Sigmoid colon (tissue), 7 donors: ENCODE measurements at regions of chr7 and their contacts with region 1.

Region 1: DNA sequence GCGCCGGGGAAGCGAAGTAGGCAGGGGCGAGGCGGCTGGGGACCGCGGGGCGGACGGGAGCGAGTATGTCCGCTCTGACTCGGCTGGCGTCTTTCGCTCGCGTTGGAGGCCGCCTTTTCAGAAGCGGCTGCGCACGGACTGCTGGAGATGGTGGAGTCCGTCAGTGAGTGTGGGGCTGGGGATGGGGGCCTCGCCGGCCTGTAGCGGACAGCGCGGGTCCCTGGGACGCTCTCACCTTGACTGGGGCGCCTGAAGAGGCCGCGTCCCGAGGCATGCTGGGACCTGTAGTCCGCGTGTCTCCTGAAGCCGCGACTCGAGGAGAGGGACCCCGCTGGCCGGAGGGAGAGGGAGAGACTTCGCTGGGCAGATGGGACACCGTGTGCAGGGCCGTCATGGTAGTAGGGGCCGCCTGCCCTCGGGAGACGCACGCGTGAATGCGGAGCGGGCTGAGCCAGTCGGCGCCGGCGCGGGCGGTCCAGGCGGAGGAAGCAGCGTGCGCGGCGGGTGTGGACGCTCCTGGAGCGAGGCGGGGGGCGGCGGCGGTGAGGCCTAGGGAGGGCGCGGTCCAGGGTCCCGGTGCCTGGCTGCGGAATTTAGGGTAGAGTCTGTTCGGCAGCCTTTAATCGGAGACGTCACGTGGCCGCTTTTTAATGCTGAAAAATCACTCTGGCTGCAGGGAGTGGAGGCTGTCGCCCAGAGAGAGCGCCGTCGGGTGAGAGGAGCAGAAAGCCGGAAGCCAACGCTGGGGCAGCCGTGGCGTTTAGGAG is at the start of gene NDUFB2:
- DNase-seq: peak; percentile 90
- H3K4me3 ChIP-seq: peak within 1 kb of the TSS; percentile 71 to 93 (median 87)
- H3K27ac ChIP-seq: peak within 1 kb of the TSS; percentile 94 to 98 (median 95)
- H3K4me1 ChIP-seq: peaks cover 0 to 28% (median 22%) of the 10 kb centered on the region in 4 donors
- H3K27me3 ChIP-seq: no peaks in the 10 kb centered on the region
- CTCF ChIP-seq: no peak
- EP300 ChIP-seq: no peak
- POLR2A ChIP-seq: peak; percentile 73 to 91
- total RNA-seq, gene NDUFB2: 170 to 377 (median 267) TPM

Region 2: DNA sequence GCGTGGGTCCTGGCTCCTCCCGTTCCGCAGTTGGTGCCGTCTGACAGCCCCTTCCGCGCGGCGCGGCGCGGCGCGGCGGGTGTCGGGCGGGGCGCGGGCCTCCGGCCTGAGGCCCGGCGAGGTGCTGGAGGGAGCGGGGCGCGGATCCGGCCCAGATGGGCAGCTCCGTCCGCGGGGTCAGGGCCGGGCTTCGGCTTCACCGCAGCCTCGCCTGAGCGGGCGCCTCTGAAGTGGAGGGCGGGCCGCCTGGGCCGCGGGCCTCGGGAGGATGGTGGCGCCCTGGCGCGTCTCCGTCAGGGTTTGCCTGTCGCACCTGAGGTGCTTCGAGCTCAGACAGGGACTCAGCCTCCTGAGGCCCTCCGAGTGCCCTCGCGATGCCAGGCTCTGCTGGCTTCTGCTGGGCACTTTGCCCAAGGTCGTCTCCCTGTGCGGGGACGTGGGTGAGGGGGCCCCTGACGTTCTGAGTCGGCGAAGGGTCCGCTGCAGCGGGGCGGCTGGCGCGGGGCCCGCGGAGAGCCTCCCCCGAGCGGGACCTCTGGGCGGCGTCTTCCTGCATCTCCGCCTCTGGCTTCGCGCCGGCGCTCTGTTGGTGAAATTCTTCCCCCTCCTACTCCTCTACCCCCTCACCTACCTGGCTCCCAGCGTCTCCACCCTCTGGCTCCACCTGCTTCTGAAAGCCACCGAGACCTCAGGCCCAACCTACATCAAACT is 23.6 kb before region 1 on chr7:
- intact Hi-C with region 1: loop called (anchors 1 kb)
- DNase-seq: peak; percentile 70
- H3K4me3 ChIP-seq: peak overlapping the region; percentile 53 to 79 (median 74)
- H3K27ac ChIP-seq: peak overlapping the region; percentile 79 to 87 (median 82)
- H3K4me1 ChIP-seq: peaks cover 0 to 35% (median 29%) of the 10 kb centered on the region in 4 donors
- H3K27me3 ChIP-seq: no peaks in the 10 kb centered on the region
- CTCF ChIP-seq: no peak
- EP300 ChIP-seq: no peak
- POLR2A ChIP-seq: peak in 1 of 2 donors; percentile 35

Region 3: GRCh38 chr7:140841166-140841715 is 144.4 kb after region 1 on chr7:
- intact Hi-C with region 1: no loop called
- DNase-seq: no peak
- H3K4me3 ChIP-seq: no peak overlapping the region
- H3K27ac ChIP-seq: no peak overlapping the region
- H3K4me1 ChIP-seq: no peaks in the 10 kb centered on the region
- H3K27me3 ChIP-seq: no peaks in the 10 kb centered on the region
- CTCF ChIP-seq: no peak
- EP300 ChIP-seq: no peak
- POLR2A ChIP-seq: no peak

Region 4: DNA sequence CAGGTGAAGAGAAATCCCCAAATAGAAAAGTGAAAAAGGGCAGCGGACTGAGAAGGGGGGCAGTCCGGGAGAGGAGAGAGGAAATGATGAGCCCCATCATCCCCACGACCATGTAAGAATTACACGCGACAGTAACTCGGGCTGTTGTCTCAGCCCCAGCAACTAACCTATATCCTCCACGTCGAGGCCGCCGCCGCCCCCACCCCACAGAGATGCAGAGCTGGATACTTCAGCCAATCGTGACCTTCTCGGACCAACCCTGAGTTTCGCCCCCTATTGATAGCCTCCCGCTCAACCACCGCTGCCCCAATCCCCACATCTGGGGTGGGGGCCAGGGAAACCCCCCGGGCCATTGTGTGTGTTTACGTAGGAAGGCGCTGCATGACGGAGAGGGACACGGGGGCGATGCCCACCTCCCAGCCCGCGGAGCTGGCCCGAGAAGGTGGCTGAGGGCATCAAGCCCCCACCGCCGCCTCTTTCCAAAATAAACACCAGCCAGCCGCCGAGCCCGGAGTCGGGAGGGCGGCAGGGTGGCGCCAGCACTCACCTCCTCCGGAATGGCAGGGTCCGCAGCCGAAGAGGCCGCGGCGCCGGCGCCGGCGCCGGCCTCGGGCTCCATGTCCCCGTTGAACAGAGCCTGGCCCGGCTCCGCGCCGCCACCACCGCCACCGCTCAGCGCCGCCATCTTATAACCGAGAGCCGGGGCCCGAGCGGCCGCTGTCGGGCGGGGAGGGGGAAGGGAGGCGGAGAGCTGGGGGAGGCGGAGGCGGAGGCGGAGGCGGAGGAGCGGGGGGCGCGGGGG is 227.4 kb after region 1 on chr7:
- intact Hi-C with region 1: loop called (anchors 5 kb)
- DNase-seq: peak; percentile 88
- H3K4me3 ChIP-seq: peak overlapping the region; percentile 91 to 97 (median 96)
- H3K27ac ChIP-seq: peak overlapping the region; percentile 96 to 100 (median 100)
- H3K4me1 ChIP-seq: peaks cover 3 to 42% (median 23%) of the 10 kb centered on the region in 4 donors
- H3K27me3 ChIP-seq: no peaks in the 10 kb centered on the region
- CTCF ChIP-seq: peak in 2 of 4 experiments; percentile 26 to 34
- EP300 ChIP-seq: peak in 1 of 4 donors; percentile 5
- POLR2A ChIP-seq: no peak